ENCODE measurements at regions of chr18 and their contacts with region 1.

Region 1: DNA sequence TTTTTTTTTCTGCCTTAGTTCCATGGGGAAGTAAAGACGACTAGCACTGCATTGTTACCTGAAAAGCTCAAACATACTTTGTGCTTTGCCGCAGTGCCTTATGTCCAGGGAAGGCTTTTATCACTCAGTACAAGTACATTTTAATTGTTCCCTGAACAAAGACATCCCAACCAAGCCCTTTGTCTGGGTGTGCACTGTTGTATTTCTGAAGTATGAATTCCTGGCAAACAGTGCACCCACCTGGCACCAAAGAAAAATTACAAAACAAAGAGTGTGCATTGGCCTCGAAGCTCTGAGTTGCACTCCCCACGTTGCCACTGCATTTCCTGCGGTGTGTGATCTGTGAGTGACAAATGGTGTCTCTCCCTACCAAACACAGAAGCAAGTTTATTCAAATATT is 858.5 kb upstream of the PIK3C3 start:
- DNase-seq: no peak
- ATAC-seq: no peak
- H3K4me3 ChIP-seq: no peak overlapping the region
- H3K27ac ChIP-seq: no peak overlapping the region
- H3K4me1 ChIP-seq: no peaks in the 10 kb centered on the region
- H3K27me3 ChIP-seq: no peaks in the 10 kb centered on the region
- CTCF ChIP-seq: no peak
- POLR2A ChIP-seq: no peak

Region 2: GRCh38 chr18:42533009-42533575 is 1436.6 kb after region 1 on chr18:
- in situ Hi-C with region 1: no loop called
- intact Hi-C with region 1: loop called (anchors 10 kb)
- DNase-seq: no peak
- ATAC-seq: no peak
- H3K4me3 ChIP-seq: no peak overlapping the region
- H3K27ac ChIP-seq: no peak overlapping the region
- H3K4me1 ChIP-seq: no peaks in the 10 kb centered on the region
- H3K27me3 ChIP-seq: no peaks in the 10 kb centered on the region
- CTCF ChIP-seq: no peak
- POLR2A ChIP-seq: no peak

Measured in gastrocnemius medialis (tissue), 4 donors.